Heart left ventricle (tissue), 16 donors: ENCODE measurements at regions of chr17 and their contacts with region 1.

Region 1: DNA sequence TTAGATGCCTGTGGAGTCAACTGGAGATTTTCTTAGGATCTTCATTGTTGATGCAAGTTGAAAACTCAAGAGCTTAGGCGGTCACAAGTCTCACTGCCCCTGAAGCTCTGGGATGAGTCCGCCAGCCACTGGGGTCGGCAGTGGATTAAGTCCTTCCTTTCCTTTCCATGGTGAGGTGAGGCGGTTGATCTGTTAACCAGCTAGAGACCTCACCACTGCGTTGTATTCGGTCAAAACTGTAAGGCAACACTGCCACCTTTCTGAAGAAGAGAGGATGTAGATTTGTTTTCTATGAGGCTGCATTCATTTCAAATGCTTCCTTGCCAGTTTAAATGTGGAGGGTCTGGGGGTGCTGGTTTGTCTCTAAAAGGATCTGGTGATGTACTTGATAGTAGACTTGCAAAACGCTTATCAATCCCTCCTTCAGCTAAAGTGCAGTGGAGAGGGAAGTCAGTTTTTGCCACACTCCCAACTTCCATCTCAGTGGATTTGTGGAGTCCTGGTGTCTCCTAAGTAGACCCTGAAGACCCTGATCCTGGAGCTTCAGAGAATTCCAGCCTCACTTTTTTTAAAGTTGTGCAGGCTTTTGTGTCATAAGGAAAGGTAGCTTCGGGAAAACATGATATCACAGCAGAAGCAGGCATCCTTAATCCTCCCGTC is 1.7 kb downstream of the MYOCD start:
- DNase-seq: peak in 4 of 5 donors; percentile 34 to 56 (median 48)
- ATAC-seq: peak; percentile 62 to 81 (median 72)
- H3K4me3 ChIP-seq: peak overlapping the region; percentile 47 to 81 (median 64)
- H3K27ac ChIP-seq: peak overlapping the region; percentile 51 to 91 (median 80)
- H3K4me1 ChIP-seq: peaks cover 0 to 33% (median 5%) of the 10 kb centered on the region in 12 donors
- H3K27me3 ChIP-seq: peaks cover 0 to 37% (median 5%) of the 10 kb centered on the region in 9 donors
- CTCF ChIP-seq: peak in 11 of 12 donors; percentile 7 to 64 (median 45)
- POLR2A ChIP-seq: peak in 1 of 2 donors; percentile 7

Region 2: DNA sequence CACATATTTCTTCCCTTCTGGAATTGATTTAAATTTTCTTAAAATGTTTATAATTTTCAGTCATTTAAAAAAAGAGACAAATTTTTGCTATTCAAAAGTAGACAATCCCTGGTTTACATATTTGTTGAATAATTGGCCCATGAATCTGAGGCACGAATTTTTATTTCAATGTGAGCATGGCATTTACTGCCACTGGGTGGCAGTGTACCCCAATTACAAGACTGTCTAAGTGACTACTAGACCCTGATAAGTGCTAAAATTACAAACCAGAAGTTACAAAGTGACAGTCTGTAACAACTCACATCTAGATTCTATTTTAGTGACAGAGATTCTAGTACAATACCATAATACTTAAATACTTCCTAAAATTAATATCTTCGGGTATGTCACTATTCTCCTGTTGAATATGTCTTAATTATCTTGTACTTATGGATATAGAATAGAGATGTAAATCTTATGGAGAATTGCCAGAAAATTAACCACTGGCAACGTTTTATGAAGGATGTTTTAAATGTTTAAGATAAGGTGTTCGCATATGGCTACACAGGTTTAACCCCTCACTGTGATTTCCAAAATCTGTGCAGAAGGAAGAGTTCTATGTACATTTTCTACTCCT is 410.9 kb before region 1 on chr17:
- intact Hi-C with region 1: loop called (anchors 2 to 5 kb)
- DNase-seq: peak in 3 of 5 donors; percentile 26 to 43 (median 29)
- ATAC-seq: peak; percentile 54 to 79 (median 72)
- H3K4me3 ChIP-seq: no peak overlapping the region
- H3K27ac ChIP-seq: peak overlapping the region in 1 of 12 donors; percentile 2
- H3K4me1 ChIP-seq: peaks cover 0 to 21% (median 0%) of the 10 kb centered on the region in 12 donors
- H3K27me3 ChIP-seq: no peaks in the 10 kb centered on the region
- CTCF ChIP-seq: peak; percentile 65 to 81 (median 75)
- POLR2A ChIP-seq: no peak

Region 3: GRCh38 chr17:12627177-12627629 is 40.2 kb before region 1 on chr17:
- intact Hi-C with region 1: no loop called
- DNase-seq: peak in 3 of 5 donors; percentile 23 to 44 (median 32)
- ATAC-seq: peak in 3 of 4 donors; percentile 73 to 84 (median 84)
- H3K4me3 ChIP-seq: no peak overlapping the region
- H3K27ac ChIP-seq: peak overlapping the region in 8 of 12 donors; percentile 28 to 65 (median 45)
- H3K4me1 ChIP-seq: peaks cover 0 to 26% (median 0%) of the 10 kb centered on the region in 12 donors
- H3K27me3 ChIP-seq: no peaks in the 10 kb centered on the region
- CTCF ChIP-seq: no peak
- POLR2A ChIP-seq: no peak

Region 4: DNA sequence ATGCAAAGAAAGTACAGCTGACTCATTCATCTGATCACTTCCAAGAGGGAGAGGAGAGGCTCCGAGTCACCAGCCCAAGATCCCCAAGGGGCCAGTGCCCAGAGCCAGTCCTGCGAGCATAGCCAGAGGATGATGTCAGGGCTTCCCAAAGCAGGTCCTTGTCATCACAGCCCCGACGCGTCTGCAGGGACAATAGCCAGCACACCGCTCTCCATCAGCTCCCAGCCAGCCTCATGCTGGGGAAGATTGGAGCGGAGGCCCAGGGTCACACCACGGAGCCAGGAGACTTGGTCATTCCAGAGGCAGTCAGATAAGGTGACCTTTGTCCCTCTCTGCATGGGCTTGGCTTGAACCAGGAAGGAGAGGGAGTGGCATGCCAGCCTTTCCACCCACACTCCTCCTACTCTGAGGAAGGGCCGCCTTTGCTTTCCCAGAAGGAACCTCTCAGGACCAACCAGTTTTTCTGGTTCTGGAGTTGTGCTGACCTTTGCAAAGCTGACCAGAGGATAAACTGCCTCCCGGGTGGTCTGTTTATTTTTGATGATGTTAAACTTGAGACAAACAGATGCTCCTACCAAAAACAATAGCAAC is 63.6 kb after region 1 on chr17:
- intact Hi-C with region 1: loop called in 6 of 10 experiments (anchors 2 to 5 kb)
- DNase-seq: peak; percentile 85 to 96 (median 85)
- ATAC-seq: peak; percentile 83 to 87 (median 84)
- H3K4me3 ChIP-seq: peak overlapping the region in 2 of 12 donors; percentile 1 to 10
- H3K27ac ChIP-seq: peak overlapping the region; percentile 37 to 93 (median 82)
- H3K4me1 ChIP-seq: peaks cover 0 to 63% (median 17%) of the 10 kb centered on the region in 12 donors
- H3K27me3 ChIP-seq: no peaks in the 10 kb centered on the region
- CTCF ChIP-seq: no peak
- POLR2A ChIP-seq: no peak

Region 5: DNA sequence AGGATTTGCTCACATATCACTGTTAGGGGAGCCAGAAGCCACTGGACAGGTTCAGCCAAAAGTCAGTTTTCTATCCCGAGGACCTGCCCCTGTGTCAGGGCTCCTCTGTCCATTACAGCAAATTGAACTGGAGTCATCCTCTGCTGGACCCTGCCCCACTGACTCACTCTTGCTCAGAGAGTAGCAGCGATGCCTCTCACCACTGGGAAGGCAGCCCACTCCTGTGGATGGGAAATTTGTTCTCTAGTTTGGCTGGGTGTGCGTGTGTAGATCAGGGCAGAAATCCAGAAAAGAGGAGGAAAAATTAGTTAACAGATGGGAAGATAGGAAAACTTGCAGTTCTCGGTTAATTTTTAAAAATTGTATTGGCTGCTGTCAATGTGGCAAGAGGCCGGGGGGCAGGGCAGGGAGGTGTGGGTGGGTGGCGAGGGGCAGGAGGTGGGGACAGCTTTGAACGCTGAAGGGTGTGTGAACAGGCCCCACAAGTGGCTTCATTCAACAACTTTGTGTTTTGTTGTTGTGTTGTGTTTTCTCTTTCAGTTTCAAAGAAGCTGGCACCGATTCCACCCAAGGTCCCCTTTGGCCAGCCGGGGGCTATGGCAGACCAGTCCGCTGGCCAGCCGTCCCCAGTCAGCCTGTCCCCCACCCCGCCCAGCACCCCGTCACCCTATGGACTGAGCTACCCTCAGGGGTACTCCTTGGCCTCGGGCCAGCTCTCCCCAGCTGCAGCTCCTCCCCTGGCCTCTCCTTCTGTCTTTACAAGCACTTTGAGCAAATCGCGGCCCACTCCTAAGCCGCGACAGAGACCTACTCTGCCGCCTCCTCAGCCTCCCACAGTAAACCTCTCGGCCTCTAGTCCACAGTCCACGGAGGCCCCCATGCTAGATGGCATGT is 316.8 kb after region 1 on chr17:
- intact Hi-C with region 1: loop called in 1 of 10 experiments (anchors 10 kb)
- DNase-seq: peak; percentile 61 to 83 (median 79)
- ATAC-seq: peak in 3 of 4 donors; percentile 56 to 77 (median 61)
- H3K4me3 ChIP-seq: peak overlapping the region in 6 of 12 donors; percentile 8 to 33 (median 22)
- H3K27ac ChIP-seq: peak overlapping the region in 11 of 12 donors; percentile 45 to 74 (median 68)
- H3K4me1 ChIP-seq: peaks cover 0 to 28% (median 18%) of the 10 kb centered on the region in 12 donors
- H3K27me3 ChIP-seq: no peaks in the 10 kb centered on the region
- CTCF ChIP-seq: no peak
- POLR2A ChIP-seq: no peak